Naive thymus-derived CD4-positive, alpha-beta T cell (primary cell): ENCODE measurements at regions of chr10 and their contacts with region 1.

Region 1: DNA sequence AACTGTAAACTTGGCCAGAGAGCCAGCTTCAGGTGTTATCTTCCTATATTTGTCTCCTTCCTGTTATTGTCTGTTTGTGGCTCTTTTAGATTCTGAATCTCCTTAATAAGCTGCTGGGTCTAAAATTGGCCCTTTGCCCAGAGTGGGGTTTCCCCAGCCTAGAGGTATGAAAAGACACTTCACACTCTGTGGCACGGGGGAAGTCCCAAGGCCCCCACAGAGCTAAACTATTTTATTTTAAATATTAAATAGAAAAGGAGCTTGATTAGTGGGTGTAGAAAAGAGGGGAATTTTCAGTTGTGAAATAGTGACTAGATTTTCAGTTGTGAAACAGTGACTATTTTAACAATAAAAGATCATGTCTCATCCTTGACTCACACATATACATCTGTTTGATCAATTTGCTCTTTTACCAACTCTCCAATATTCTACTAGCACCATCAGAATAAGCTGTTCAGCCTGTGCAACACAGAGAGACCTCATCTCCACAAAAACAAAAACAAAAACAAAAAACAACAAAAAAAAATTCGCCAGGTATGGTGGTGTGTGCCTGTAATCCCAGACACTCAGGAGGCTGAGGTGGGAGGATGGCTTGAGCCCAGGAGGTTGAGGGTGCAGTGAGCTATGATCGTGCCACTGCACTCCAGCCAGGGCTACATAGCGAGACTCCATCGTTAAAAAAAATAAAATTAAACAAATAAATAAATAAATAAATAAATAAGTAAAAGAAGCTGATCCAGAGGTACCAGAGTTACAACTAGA is 24.9 kb upstream of the ADO start:
- DNase-seq: peak; percentile 35 to 88 (median 75)
- ATAC-seq: peak; percentile 97
- H3K4me3 ChIP-seq: no peak overlapping the region
- H3K4me3 Mint-ChIP-seq: peak overlapping the region; percentile 0 to 71 (median 52)
- H3K27ac ChIP-seq: no peak overlapping the region
- H3K27ac Mint-ChIP-seq: peak overlapping the region in 6 of 9 donors; percentile 0 to 79 (median 8)
- H3K4me1 ChIP-seq: peaks cover 13 to 15% of the 10 kb centered on the region in 2 donors
- H3K4me1 Mint-ChIP-seq: peaks cover 10 to 22% (median 17%) of the 10 kb centered on the region in 7 donors
- H3K27me3 ChIP-seq: no peaks in the 10 kb centered on the region
- H3K27me3 Mint-ChIP-seq: peaks cover 0 to 38% (median 0%) of the 10 kb centered on the region in 5 donors

Region 2: DNA sequence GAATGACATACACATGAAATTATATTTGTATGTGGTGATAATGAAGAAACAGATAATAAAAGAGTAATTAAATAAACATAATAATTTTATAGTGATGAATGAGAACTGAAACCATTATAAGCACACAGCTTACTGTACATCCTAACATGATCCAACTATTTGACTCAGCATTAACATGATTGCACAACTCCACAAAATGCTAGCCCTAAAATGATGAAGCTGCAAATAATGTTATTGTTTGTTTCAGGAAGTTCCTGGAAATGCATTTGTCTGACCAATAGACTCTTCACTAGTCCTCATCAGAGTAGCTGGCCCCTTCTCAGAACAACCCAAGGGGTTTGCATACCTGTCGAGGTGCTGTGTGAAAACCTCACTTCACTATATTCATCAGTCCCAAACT is 626.5 kb before region 1 on chr10:
- CTCF ChIA-PET with region 1: no interaction called
- POLR2A ChIA-PET with region 1: no interaction called
- intact Hi-C with region 1: no loop called
- DNase-seq: no peak
- ATAC-seq: peak; percentile 52
- H3K4me3 ChIP-seq: no peak overlapping the region
- H3K4me3 Mint-ChIP-seq: no peak overlapping the region
- H3K27ac ChIP-seq: no peak overlapping the region
- H3K27ac Mint-ChIP-seq: no peak overlapping the region
- H3K4me1 ChIP-seq: no peaks in the 10 kb centered on the region
- H3K4me1 Mint-ChIP-seq: peaks cover 3 to 14% (median 11%) of the 10 kb centered on the region in 7 donors
- H3K27me3 ChIP-seq: no peaks in the 10 kb centered on the region
- H3K27me3 Mint-ChIP-seq: no peaks in the 10 kb centered on the region

Region 3: GRCh38 chr10:62804356-62805230 is 24.9 kb after region 1 on chr10 and contains the start of gene ADO:
- CTCF ChIA-PET with region 1: interaction called, 3 read pairs
- POLR2A ChIA-PET with region 1: interaction called, 7 read pairs
- intact Hi-C with region 1: loop called in 1 of 2 experiments (anchors 2 kb)
- DNase-seq: peak; percentile 69 to 86 (median 80)
- ATAC-seq: peak; percentile 93
- H3K4me3 ChIP-seq: peak within 1 kb of the TSS; percentile 66
- H3K4me3 Mint-ChIP-seq: peak within 1 kb of the TSS; percentile 90 to 100 (median 96)
- H3K27ac ChIP-seq: peak within 1 kb of the TSS; percentile 86
- H3K27ac Mint-ChIP-seq: peak within 1 kb of the TSS; percentile 93 to 100 (median 98)
- H3K4me1 ChIP-seq: peaks cover 15 to 19% of the 10 kb centered on the region in 2 donors
- H3K4me1 Mint-ChIP-seq: peaks cover 22 to 47% (median 39%) of the 10 kb centered on the region in 7 donors
- H3K27me3 ChIP-seq: no peaks in the 10 kb centered on the region
- H3K27me3 Mint-ChIP-seq: peaks cover 0 to 20% (median 0%) of the 10 kb centered on the region in 5 donors
- total RNA-seq, gene ADO: 9.8 to 21.3 (median 15.6) TPM

Region 4: DNA sequence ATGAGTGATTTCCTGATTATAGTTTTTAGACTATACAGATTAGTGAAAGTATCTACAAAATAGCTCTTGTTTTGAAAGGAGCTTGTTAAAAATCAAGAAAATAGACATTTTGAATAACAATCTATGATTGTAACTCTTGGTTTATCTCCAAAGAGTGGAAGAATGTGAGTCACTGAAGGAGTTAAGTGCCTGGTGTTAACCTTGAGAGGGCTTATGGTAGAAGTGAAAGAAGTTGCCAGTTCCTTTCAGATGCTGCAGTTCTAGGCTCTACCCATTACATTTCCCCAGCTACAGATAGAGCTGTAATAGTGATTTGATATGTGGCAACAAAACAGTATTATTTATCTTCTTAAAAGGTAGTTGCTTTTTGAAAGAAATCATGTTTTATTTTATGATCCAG is 366.1 kb after region 1 on chr10:
- CTCF ChIA-PET with region 1: no interaction called
- POLR2A ChIA-PET with region 1: no interaction called
- intact Hi-C with region 1: no loop called
- DNase-seq: no peak
- ATAC-seq: no peak
- H3K4me3 ChIP-seq: no peak overlapping the region
- H3K4me3 Mint-ChIP-seq: peak overlapping the region in 1 of 10 donors; percentile 29
- H3K27ac ChIP-seq: no peak overlapping the region
- H3K27ac Mint-ChIP-seq: peak overlapping the region in 3 of 9 donors; percentile 36 to 57 (median 46)
- H3K4me1 ChIP-seq: no peaks in the 10 kb centered on the region
- H3K4me1 Mint-ChIP-seq: peaks cover 34 to 77% (median 71%) of the 10 kb centered on the region in 7 donors
- H3K27me3 ChIP-seq: no peaks in the 10 kb centered on the region
- H3K27me3 Mint-ChIP-seq: no peaks in the 10 kb centered on the region